ENCODE measurements at regions of chr1 and their contacts with region 1.

Region 1: DNA sequence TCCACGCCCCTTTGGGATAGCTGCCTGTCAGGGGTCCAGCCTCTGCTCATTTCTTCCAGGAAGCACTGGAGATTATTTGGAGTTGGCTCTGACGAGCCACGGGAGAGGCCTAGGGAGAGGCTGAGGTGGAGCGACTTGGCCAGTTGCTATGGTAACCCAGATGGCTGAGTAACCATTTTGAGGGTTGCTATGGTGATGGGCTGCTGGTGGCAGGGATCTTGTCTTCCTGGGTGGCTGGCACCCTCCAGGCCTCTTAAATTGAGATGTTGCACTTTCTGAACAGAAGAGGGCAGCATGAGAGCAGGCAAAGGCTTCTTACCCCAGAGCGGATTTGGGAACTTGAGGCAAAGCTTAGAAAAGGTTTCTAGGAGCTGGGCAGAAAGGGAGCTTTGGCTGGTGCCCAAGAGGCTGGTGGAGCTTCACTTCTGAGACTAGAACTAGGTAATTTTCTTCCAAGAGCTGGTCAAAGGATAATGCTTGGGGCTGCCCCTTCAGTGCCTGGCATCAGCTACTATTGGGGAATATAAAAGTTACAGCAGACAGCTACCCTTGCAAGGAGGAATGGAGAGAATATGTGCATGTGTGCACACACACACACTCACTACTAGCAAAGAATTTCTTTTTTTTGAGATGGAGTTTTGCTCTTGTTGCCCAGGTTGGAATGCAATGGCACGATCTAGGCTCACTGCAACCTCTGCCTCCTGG is 72.5 kb downstream of the NDUFS5 start:
- DNase-seq: peak; percentile 92
- ATAC-seq: peak; percentile 78
- H3K4me3 ChIP-seq: no peak overlapping the region
- H3K27ac ChIP-seq: no peak overlapping the region
- H3K4me1 ChIP-seq: peaks cover 6% of the 10 kb centered on the region
- H3K27me3 ChIP-seq: no peaks in the 10 kb centered on the region
- CTCF ChIP-seq: peak; percentile 91
- POLR2A ChIP-seq: peak; percentile 41; the same call in 1 of the 2 replicates
- RAD21 ChIP-seq: peak; percentile 97

Region 2: DNA sequence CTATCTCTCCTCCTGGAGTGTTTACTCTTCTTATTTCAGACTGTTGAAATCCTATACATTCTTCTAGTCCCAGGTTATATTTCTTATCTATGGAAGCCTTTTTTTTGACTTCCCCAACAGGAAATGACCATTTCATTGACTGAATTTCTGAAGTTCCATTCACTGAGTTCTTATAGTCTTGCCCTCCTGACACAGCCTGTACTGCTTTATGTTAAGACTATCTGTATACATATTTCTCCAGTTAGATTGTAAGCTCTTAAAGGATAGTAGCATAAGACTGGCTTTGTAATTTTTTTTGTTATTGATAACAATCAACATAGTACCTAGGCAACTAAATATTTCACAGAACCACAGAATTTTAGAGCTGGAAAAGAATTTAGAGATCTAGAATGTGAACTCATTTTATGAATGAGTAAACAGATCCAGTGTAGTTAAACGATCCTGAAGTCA is 90.9 kb after region 1 on chr1:
- CTCF ChIA-PET with region 1: interaction called, 7 read pairs
- POLR2A ChIA-PET with region 1: no interaction called
- dilution Hi-C with region 1: no loop called
- in situ Hi-C with region 1: loop called (anchors 5 kb)
- intact Hi-C with region 1: loop called (anchors 1 kb)
- DNase-seq: peak; percentile 86
- ATAC-seq: peak; percentile 35
- H3K4me3 ChIP-seq: no peak overlapping the region
- H3K27ac ChIP-seq: no peak overlapping the region; the same call in 1 of the 2 replicates
- H3K4me1 ChIP-seq: peaks cover 25% of the 10 kb centered on the region
- H3K27me3 ChIP-seq: no peaks in the 10 kb centered on the region
- CTCF ChIP-seq: no peak
- POLR2A ChIP-seq: no peak
- RAD21 ChIP-seq: 0 out of 2 replicates have a peak, but pooled peaks have one; percentile 4

Region 3: GRCh38 chr1:39258146-39258924 is 159.6 kb after region 1 on chr1:
- CTCF ChIA-PET with region 1: no interaction called
- POLR2A ChIA-PET with region 1: no interaction called
- dilution Hi-C with region 1: no loop called
- in situ Hi-C with region 1: loop called (anchors 5 kb)
- intact Hi-C with region 1: loop called (anchors 1 kb)
- DNase-seq: peak; percentile 65
- ATAC-seq: peak; percentile 57
- H3K4me3 ChIP-seq: no peak overlapping the region
- H3K27ac ChIP-seq: no peak overlapping the region
- H3K4me1 ChIP-seq: peaks cover 10% of the 10 kb centered on the region
- H3K27me3 ChIP-seq: no peaks in the 10 kb centered on the region
- CTCF ChIP-seq: peak; percentile 72
- POLR2A ChIP-seq: no peak
- RAD21 ChIP-seq: peak; percentile 86

Region 4: GRCh38 chr1:39538588-39539465 is 440.1 kb after region 1 on chr1:
- CTCF ChIA-PET with region 1: interaction called, 11 read pairs
- POLR2A ChIA-PET with region 1: no interaction called
- dilution Hi-C with region 1: no loop called
- in situ Hi-C with region 1: loop called (anchors 5 kb)
- intact Hi-C with region 1: loop called (anchors 1 kb)
- DNase-seq: peak; percentile 72
- ATAC-seq: peak; percentile 95
- H3K4me3 ChIP-seq: no peak overlapping the region
- H3K27ac ChIP-seq: no peak overlapping the region
- H3K4me1 ChIP-seq: peaks cover 3% of the 10 kb centered on the region
- H3K27me3 ChIP-seq: no peaks in the 10 kb centered on the region
- CTCF ChIP-seq: peak; percentile 90
- POLR2A ChIP-seq: no peak
- RAD21 ChIP-seq: peak; percentile 89

Region 5: GRCh38 chr1:39720094-39720999 is 621.6 kb after region 1 on chr1:
- CTCF ChIA-PET with region 1: no interaction called
- POLR2A ChIA-PET with region 1: no interaction called
- dilution Hi-C with region 1: no loop called
- in situ Hi-C with region 1: no loop called
- intact Hi-C with region 1: loop called (anchors 5 kb)
- DNase-seq: peak; percentile 66
- ATAC-seq: peak; percentile 83
- H3K4me3 ChIP-seq: no peak overlapping the region
- H3K27ac ChIP-seq: no peak overlapping the region
- H3K4me1 ChIP-seq: no peaks in the 10 kb centered on the region
- H3K27me3 ChIP-seq: peaks cover 40% of the 10 kb centered on the region
- CTCF ChIP-seq: peak; percentile 82
- POLR2A ChIP-seq: no peak
- RAD21 ChIP-seq: peak; percentile 80